Mammary epithelial cell (primary cell): ENCODE measurements at regions of chr21 and their contacts with region 1.

Region 1: DNA sequence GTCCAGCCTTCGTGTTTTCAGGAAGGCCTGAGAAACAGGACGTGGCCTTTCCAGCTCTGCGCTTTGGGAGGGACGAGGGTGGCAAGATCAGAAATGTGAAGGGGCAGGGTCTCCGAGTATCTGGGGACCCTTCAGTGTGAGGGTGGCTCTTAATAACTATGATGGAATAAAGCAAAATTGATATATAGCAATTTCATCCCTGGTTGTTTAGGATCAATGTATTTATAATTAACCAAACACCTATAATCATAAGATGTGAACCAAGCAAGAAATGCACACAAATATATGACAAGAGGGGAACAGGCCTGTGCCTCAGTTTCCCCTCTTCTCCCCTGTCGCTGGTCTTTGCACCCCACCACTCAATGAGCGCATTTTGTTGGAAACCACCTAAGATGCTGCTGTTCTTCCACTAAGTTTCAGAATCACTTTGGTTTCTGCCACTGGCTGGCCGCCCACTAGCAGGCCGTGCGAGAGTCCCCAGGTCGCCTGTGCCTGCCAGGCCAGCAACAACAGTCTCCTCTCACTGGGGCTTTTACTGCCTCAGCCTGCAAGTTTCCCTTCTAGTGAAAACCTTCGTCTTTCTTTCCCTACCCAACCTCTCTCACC is 36.6 kb downstream of the UBASH3A start:
- DNase-seq: no peak
- H3K4me3 ChIP-seq: no peak overlapping the region
- H3K27ac ChIP-seq: no peak overlapping the region
- H3K4me1 ChIP-seq: no peaks in the 10 kb centered on the region
- H3K27me3 ChIP-seq: no peaks in the 10 kb centered on the region
- CTCF ChIP-seq: no peak

Region 2: DNA sequence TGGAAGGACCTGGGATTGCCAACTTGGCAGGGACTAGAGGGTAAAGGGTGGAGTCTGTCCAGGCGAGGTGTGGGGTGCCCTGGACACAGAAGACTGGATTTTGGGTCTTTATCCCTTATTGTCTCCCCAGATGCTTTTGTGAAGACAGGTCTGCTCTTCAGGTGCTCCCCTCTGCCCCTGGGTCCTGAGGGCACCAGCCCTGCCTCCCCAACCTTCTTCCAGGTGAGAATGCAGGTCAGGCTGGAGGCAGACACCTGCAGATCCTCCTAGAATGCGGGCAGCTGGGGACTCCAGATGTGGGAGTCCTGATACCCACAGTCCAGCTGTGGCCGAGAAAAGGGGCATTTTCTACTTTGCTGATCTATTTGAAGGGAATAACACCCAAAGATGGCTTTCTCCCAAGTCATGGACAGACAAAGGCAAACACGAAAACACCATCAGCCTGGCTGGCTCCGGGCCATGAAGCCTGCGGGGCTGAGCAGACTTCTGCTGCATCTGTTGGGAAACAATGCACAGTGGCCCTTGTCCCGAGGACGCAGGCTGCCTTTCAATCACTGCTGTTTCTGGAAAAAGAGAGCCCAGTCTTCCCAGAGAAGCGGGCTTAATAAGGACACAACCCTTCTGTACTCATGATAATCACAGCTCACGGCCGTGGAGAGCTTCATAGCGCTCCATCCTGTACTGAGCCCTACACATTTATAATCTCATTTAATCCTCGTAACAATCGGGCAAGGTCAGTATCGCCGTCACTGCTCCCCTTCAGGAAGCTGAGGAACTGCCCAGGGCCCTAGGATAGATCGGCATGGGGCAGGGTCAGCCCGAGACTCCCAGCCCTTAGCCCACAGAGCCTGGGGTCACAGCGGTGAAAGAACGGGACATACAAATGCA is 283.4 kb before region 1 on chr21:
- CTCF ChIA-PET with region 1: no interaction called
- dilution Hi-C with region 1: loop called (anchors 5 kb)
- in situ Hi-C with region 1: loop called (anchors 10 kb)
- intact Hi-C with region 1: no loop called
- DNase-seq: no peak
- H3K4me3 ChIP-seq: no peak overlapping the region
- H3K27ac ChIP-seq: no peak overlapping the region
- H3K4me1 ChIP-seq: no peaks in the 10 kb centered on the region
- H3K27me3 ChIP-seq: no peaks in the 10 kb centered on the region
- CTCF ChIP-seq: no peak

Region 3: GRCh38 chr21:42309753-42310221 is 130.5 kb before region 1 on chr21:
- CTCF ChIA-PET with region 1: no interaction called
- dilution Hi-C with region 1: no loop called
- in situ Hi-C with region 1: loop called in 1 of 2 experiments (anchors 10 kb)
- intact Hi-C with region 1: no loop called
- DNase-seq: no peak
- H3K4me3 ChIP-seq: no peak overlapping the region
- H3K27ac ChIP-seq: no peak overlapping the region
- H3K4me1 ChIP-seq: no peaks in the 10 kb centered on the region
- H3K27me3 ChIP-seq: no peaks in the 10 kb centered on the region
- CTCF ChIP-seq: peak; percentile 70 to 80

Region 4: GRCh38 chr21:42350896-42351543 is 89.3 kb before region 1 on chr21 and contains the start of gene TFF2:
- CTCF ChIA-PET with region 1: no interaction called
- dilution Hi-C with region 1: loop called (anchors 10 kb)
- in situ Hi-C with region 1: no loop called
- intact Hi-C with region 1: no loop called
- DNase-seq: no peak
- H3K4me3 ChIP-seq: no peak within 1 kb of the TSS
- H3K27ac ChIP-seq: no peak within 1 kb of the TSS
- H3K4me1 ChIP-seq: no peaks in the 10 kb centered on the region
- H3K27me3 ChIP-seq: peaks cover 2% of the 10 kb centered on the region
- CTCF ChIP-seq: no peak
- total RNA-seq, gene TFF2: not detected

Region 5: DNA sequence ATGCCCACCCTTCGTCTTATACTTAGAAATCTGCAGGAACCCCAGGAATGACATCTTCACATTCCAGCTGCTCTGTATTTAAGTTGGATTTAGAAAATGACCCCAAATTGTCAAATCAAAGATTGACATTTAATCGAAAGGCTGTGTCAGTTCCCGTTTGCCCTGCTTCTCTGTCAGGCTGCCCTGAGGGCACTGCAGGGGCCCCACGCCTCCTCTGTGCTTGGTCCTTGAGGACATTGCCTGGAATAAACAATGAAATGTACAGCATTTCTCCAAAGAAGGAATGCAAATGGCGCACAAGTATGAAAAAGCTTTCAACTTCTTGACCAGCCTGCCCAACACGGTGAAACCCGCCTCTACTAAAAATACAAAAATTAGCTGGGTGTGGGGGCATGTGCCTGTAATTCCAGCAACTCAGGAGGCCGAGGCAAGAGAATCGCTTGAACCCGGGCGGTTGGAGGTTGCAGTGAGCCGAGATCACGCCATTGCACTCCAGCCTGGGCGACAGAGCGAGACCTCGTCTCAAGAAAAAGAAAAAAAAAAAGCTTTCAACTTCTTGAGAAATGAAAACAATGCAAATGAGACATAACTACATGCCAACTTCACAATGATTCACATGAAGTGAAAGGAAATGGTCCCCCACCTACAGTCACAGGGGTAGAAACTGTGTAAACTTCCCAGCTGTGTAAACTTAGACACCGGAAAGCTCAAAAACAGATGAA is 47.4 kb before region 1 on chr21:
- CTCF ChIA-PET with region 1: no interaction called
- dilution Hi-C with region 1: loop called (anchors 10 kb)
- in situ Hi-C with region 1: no loop called
- intact Hi-C with region 1: no loop called
- DNase-seq: no peak
- H3K4me3 ChIP-seq: no peak overlapping the region
- H3K27ac ChIP-seq: no peak overlapping the region
- H3K4me1 ChIP-seq: no peaks in the 10 kb centered on the region
- H3K27me3 ChIP-seq: no peaks in the 10 kb centered on the region
- CTCF ChIP-seq: no peak